ENCODE measurements at regions of chr10 and their contacts with region 1.

Region 1: GRCh38 chr10:61465901-61466632 is 12.9 kb upstream of the TMEM26 start:
- DNase-seq: peak in 1 of 2 experiments; percentile 39
- H3K4me3 ChIP-seq: no peak overlapping the region
- H3K4me3 Mint-ChIP-seq: no peak overlapping the region
- H3K27ac Mint-ChIP-seq: no peak overlapping the region
- H3K4me1 ChIP-seq: no peaks in the 10 kb centered on the region
- H3K4me1 Mint-ChIP-seq: no peaks in the 10 kb centered on the region
- H3K27me3 ChIP-seq: no peaks in the 10 kb centered on the region
- H3K27me3 Mint-ChIP-seq: peaks cover 3% of the 10 kb centered on the region
- CTCF ChIP-seq: peak in 1 of 2 experiments; percentile 23

Region 2: GRCh38 chr10:61592581-61592980 is 126.5 kb after region 1 on chr10:
- CTCF ChIA-PET with region 1: no interaction called
- POLR2A ChIA-PET with region 1: no interaction called
- intact Hi-C with region 1: loop called (anchors 1 kb)
- DNase-seq: peak; percentile 70
- H3K4me3 ChIP-seq: no peak overlapping the region
- H3K4me3 Mint-ChIP-seq: no peak overlapping the region
- H3K27ac Mint-ChIP-seq: no peak overlapping the region
- H3K4me1 ChIP-seq: no peaks in the 10 kb centered on the region
- H3K4me1 Mint-ChIP-seq: peaks cover 6% of the 10 kb centered on the region
- H3K27me3 ChIP-seq: 0 out of 2 replicates have a peak, but pooled peaks cover 1% of the 10 kb centered on the region
- H3K27me3 Mint-ChIP-seq: peaks cover 21% of the 10 kb centered on the region
- CTCF ChIP-seq: peak; percentile 81 to 88

Region 3: GRCh38 chr10:61643316-61643751 is 177.3 kb after region 1 on chr10:
- CTCF ChIA-PET with region 1: no interaction called
- POLR2A ChIA-PET with region 1: no interaction called
- intact Hi-C with region 1: no loop called
- DNase-seq: no peak
- H3K4me3 ChIP-seq: no peak overlapping the region
- H3K4me3 Mint-ChIP-seq: no peak overlapping the region
- H3K27ac Mint-ChIP-seq: no peak overlapping the region
- H3K4me1 ChIP-seq: no peaks in the 10 kb centered on the region
- H3K4me1 Mint-ChIP-seq: no peaks in the 10 kb centered on the region
- H3K27me3 ChIP-seq: peaks cover 3% of the 10 kb centered on the region
- H3K27me3 Mint-ChIP-seq: peaks cover 12% of the 10 kb centered on the region
- CTCF ChIP-seq: no peak